Endothelial cell of umbilical vein (primary cell): ENCODE measurements at regions of chr3 and their contacts with region 1.

Region 1: DNA sequence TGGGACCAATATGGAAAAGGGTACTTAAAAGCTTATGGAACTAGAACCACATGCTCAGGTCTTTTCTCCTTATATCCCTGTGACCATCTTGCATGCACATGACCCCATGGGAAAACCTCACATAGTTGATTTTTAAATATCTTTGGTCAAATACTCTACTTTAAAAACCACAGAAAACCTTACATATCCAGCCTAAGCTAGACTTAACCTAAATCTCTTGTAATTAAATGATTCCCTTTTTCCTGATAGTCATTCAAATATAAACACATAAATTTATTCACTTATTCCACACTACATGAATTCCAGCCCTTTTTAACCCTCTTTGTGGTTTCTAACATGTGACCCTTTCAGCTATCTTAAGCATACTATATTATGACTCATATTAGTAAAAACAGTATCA is 46.8 kb downstream of the DNAJC13 start:
- DNase-seq: no peak
- H3K4me3 ChIP-seq: no peak overlapping the region
- H3K27ac ChIP-seq: no peak overlapping the region
- H3K4me1 ChIP-seq: no peaks in the 10 kb centered on the region
- H3K27me3 ChIP-seq: no peaks in the 10 kb centered on the region
- CTCF ChIP-seq: no peak
- POLR2A ChIP-seq: no peak

Region 2: GRCh38 chr3:132352541-132353143 is 111.4 kb before region 1 on chr3:
- CTCF ChIA-PET with region 1: no interaction called
- POLR2A ChIA-PET with region 1: no interaction called
- dilution Hi-C with region 1: no loop called
- intact Hi-C with region 1: loop called (anchors 10 kb)
- DNase-seq: peak; percentile 77
- H3K4me3 ChIP-seq: no peak overlapping the region
- H3K27ac ChIP-seq: no peak overlapping the region
- H3K4me1 ChIP-seq: no peaks in the 10 kb centered on the region
- H3K27me3 ChIP-seq: peaks cover 0 to 4% of the 10 kb centered on the region in 2 experiments
- CTCF ChIP-seq: peak; percentile 78 to 84
- POLR2A ChIP-seq: no peak

Region 3: DNA sequence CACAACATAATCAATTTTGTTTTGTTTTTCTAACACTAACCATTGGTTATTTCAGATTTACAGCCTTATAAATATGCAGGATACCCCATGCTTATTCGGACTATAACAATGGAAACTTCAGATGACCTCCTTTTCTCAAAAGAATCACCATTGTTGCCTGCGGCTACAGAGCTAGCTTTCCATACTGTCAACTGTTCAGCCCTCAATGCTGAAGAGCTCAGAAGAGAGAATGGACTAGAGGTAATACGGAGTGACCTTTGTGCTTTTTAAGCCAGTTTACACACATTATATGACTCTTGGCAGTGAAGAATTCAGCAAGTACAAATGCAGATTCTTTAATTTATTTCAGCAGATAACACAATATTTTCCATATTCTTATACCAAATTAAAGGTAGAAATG is 35.0 kb after region 1 on chr3:
- CTCF ChIA-PET with region 1: no interaction called
- POLR2A ChIA-PET with region 1: no interaction called
- dilution Hi-C with region 1: no loop called
- intact Hi-C with region 1: loop called (anchors 5 kb)
- DNase-seq: no peak
- H3K4me3 ChIP-seq: no peak overlapping the region
- H3K27ac ChIP-seq: no peak overlapping the region
- H3K4me1 ChIP-seq: no peaks in the 10 kb centered on the region
- H3K27me3 ChIP-seq: no peaks in the 10 kb centered on the region
- CTCF ChIP-seq: no peak
- POLR2A ChIP-seq: no peak